ENCODE measurements at regions of chr2 and their contacts with region 1.

Region 1: DNA sequence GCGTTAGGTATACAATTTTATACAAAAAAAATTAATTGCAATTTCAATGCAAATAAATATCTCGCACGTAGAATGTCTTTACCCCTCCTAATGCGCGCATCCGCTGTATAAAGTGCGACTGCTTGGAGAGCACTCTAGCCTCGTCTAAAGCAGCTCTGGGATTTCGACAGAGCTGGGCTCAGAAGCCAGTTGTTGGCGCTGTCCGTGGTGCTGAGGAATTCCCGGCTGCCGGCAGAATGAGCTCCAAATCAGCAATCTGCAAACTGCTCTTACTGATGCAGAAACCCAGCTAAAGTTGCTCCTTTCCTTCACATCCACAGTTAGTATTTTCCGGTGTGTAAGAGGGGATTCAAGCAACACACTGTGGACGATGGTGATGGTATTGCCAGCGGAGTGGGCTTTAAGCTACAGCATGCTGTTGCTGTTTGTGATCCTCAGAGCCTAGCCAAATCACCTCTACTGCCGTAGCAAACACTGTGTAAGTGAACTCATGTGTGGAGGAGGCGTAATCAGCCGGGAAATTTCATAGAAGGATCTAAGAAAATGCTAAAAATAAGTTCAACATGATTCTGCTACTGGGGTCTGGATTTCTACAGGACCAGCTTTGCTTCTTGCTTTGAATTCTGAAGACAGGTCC is at the start of gene VWC2L:
- DNase-seq: peak; percentile 21 to 67
- H3K4me3 ChIP-seq: no peak within 1 kb of the TSS
- H3K27ac ChIP-seq: no peak within 1 kb of the TSS
- H3K4me1 ChIP-seq: no peaks in the 10 kb centered on the region
- H3K27me3 ChIP-seq: no peaks in the 10 kb centered on the region
- CTCF ChIP-seq: no peak
- POLR2A ChIP-seq: no peak
- total RNA-seq, gene VWC2L: 0.15 TPM in 1 of 3 donors, not detected in the others

Region 2: GRCh38 chr2:214611015-214611414 is 200.0 kb after region 1 on chr2:
- intact Hi-C with region 1: loop called (anchors 5 kb)
- DNase-seq: no peak
- H3K4me3 ChIP-seq: no peak overlapping the region
- H3K27ac ChIP-seq: no peak overlapping the region
- H3K4me1 ChIP-seq: no peaks in the 10 kb centered on the region
- H3K27me3 ChIP-seq: no peaks in the 10 kb centered on the region
- CTCF ChIP-seq: no peak
- POLR2A ChIP-seq: no peak

Measured in breast epithelium (tissue), 4 donors.